Colonic mucosa (tissue), 4 donors: ENCODE measurements at regions of chr2 and their contacts with region 1.

Region 1: DNA sequence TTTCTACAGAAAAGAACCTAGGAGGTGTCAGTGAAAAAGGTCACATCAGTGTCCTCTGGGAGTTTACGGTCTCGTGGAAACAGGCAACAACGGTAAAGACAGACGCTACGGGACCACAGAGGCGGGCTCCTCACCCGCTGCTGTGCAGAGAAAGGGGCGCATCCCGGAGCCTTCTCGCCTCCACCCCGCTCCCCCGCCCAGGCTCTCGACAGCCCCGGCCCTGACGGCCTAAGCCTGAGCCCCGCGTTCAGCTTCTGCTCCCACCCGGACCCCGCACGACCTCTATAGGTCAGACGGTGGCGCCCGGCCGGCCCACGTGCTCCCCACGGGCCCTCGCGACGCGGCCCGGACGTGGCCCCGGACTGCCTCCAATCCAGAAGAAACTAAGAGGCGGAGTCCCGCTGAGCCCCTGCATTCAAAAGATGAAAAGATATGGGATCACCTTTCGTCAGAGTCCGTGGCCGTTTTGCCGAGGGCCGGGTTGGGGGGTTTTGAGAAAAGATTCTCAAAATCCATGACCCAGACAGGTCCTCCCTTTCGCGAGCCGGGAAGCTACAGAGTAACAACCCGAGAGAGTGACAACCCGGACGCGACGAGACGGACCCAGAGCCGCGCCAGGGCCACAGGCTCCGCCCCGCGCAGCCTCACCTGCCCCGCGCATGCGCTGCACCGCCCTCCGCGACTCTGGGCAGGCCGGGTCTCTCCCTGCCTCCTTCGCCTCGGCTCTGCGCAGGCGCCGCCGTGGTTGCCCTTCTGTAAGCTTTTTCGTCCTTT is at the start of gene ZC3H8:
- DNase-seq: peak; percentile 96
- H3K4me3 ChIP-seq: peak within 1 kb of the TSS; percentile 72
- H3K27ac ChIP-seq: peak within 1 kb of the TSS; percentile 81
- H3K4me1 ChIP-seq: no peaks in the 10 kb centered on the region
- H3K27me3 ChIP-seq: no peaks in the 10 kb centered on the region
- CTCF ChIP-seq: no peak
- total RNA-seq, gene ZC3H8: 5.9 to 8.1 TPM

Region 2: DNA sequence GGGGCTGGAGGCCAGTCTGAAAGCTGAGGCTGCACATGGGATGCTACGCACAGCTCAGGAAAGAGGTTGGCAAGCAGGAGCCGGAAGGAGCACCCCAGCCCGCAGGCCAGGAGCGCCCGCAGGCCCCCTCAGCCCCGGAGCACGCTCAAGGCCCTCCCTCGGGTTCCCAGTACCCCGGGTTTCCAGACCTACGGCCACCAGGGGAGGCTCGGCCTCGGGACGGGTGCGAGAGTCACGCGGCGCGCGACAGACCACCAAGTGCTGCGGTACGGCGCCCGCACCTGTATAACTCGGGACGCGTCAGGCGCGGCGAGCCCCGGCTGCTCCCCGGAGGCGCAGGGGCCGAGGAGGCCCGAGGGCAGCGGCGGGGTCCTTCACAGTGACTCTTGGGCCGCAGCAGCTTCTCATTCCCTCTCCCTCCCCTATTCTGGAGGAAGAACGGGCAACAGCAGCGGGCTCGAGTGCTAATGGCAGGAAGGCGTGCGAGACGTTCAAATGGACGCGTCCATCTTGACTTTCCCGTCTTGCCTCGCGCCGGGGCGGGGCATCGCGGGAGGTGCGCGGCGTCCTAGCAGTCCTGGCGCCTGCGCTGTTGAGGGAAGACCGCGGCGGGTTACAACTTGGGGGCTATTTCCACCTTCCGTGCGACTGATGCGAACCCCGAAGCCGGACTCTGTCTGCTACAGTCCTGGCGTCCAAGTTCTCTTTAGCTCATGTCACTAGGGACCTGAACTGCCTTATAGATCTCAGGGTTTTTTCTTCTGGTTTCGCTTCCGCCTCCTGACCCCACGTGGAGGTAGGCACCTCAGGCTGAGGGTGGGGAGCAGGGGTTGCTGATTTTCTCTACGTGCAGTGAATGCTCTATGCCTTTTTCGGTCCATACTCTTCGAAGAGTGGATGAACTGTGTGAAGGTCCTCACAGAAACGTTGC is 370.7 kb before region 1 on chr2 and contains the start of gene ANAPC1:
- intact Hi-C with region 1: loop called (anchors 10 kb)
- DNase-seq: peak; percentile 92
- H3K4me3 ChIP-seq: peak within 1 kb of the TSS; percentile 88
- H3K27ac ChIP-seq: peak within 1 kb of the TSS; percentile 68
- H3K4me1 ChIP-seq: peaks cover 7% of the 10 kb centered on the region
- H3K27me3 ChIP-seq: no peaks in the 10 kb centered on the region
- CTCF ChIP-seq: no peak
- total RNA-seq, gene ANAPC1: 32.9 to 62.1 TPM

Region 3: GRCh38 chr2:112054847-112055729 is 199.6 kb before region 1 on chr2 and contains the start of gene TMEM87B:
- intact Hi-C with region 1: loop called (anchors 10 kb)
- DNase-seq: peak; percentile 99
- H3K4me3 ChIP-seq: peak within 1 kb of the TSS; percentile 88
- H3K27ac ChIP-seq: peak within 1 kb of the TSS; percentile 100
- H3K4me1 ChIP-seq: peaks cover 10% of the 10 kb centered on the region
- H3K27me3 ChIP-seq: no peaks in the 10 kb centered on the region
- CTCF ChIP-seq: no peak
- total RNA-seq, gene TMEM87B: 56.7 to 71.2 TPM

Region 4: GRCh38 chr2:112118148-112118547 is 136.5 kb before region 1 on chr2:
- intact Hi-C with region 1: no loop called
- DNase-seq: no peak
- H3K4me3 ChIP-seq: no peak overlapping the region
- H3K27ac ChIP-seq: no peak overlapping the region
- H3K4me1 ChIP-seq: no peaks in the 10 kb centered on the region
- H3K27me3 ChIP-seq: no peaks in the 10 kb centered on the region
- CTCF ChIP-seq: no peak

Region 5: DNA sequence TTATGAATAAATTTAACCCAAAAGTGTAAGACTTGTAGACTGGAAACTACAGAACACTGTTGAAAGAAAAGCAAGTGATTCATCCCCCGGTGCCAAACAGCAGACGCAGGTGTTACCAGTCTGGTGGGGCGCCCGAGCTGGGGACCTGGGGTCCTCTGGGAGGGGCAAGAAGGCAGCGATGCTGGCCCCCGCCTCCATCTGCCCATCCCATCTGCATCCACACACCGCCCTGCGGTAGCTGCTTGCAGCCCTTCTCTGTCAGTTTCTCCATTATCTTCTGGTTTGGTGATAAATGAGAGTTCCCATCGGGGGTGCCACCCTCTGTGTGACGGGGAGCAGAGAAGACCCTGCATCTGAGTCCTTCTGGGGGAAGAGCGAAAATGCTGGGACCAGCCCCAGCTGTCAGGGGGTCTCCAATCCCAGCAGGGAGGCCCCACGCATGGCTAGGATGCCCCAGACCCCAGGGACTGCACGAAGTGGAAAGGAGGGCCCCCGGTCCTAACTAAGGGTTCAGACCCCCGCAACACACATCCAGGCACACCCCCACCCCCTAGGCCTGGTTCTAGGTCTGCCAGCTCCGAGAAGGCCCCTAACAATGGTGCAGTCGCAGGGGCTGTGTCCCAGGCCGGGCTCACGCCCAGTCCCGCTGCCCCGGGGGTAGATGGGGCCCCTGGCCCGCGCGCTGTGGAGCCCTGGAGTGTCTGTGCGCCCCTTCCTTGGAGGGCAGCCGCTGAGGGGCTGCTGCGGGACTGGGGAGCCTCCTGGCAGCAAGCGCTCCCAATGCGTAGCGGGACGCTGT is 179.5 kb after region 1 on chr2:
- intact Hi-C with region 1: loop called (anchors 5 kb)
- DNase-seq: no peak
- H3K4me3 ChIP-seq: no peak overlapping the region
- H3K27ac ChIP-seq: no peak overlapping the region
- H3K4me1 ChIP-seq: no peaks in the 10 kb centered on the region
- H3K27me3 ChIP-seq: no peaks in the 10 kb centered on the region
- CTCF ChIP-seq: no peak